ENCODE measurements at regions of chr9 and their contacts with region 1.

Region 1: DNA sequence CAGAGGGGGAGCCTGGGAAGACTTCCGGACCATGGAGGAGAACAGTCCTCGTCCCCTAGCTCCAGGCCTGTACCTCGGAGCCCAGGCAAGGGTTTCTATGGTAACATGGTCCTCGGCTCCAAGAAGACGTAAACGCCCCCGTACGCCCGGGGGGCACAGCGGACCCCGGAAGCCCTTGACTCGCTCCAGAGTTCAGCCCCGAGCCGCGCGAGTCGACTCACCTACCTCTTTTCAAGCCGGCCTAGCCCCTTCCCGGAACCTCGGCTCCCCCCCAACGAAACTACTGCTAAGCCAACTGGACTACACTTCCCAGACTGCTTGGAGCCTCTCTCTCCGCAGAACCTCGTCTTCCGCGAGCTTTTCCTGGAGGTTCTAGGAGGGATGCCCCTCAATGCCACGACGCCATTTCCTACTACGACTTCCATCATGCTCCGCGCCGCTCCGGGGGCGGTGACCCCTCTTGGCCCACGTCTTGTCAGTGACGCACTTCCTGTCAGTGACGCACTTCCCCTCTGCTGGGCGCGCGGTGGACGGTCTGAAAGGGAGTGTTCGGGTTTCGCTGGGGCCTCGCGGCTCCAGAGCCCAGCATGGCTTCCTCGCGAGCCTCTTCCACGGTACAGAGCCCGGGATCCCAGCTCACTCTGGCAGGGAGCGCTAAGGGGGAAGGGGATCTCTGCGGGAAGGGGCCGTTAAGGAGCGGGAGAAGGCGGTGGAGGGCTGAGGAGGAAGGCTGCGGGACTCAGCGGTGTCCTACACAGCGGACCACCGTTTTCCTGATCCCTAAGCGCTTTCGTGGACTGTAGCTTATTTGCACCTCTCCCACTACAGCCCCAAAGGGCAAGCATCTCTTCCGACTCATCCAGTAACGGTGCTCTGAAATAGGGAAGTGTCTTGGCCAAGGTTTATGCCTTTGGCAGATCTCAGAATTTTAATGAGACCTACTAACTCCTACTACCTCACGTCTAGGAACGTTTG is at the starts of genes CDC26 and PRPF4:
- DNase-seq: peak; percentile 99
- H3K4me3 Mint-ChIP-seq: no peak within 1 kb of the TSS
- H3K27ac Mint-ChIP-seq: no peak within 1 kb of the TSS
- H3K4me1 Mint-ChIP-seq: peaks cover 28% of the 10 kb centered on the region
- H3K27me3 Mint-ChIP-seq: no peaks in the 10 kb centered on the region
- total RNA-seq, gene CDC26: 52.0 and 57.4 TPM in 2 replicates
- total RNA-seq, gene PRPF4: 63.6 and 64.6 TPM in 2 replicates

Region 2: DNA sequence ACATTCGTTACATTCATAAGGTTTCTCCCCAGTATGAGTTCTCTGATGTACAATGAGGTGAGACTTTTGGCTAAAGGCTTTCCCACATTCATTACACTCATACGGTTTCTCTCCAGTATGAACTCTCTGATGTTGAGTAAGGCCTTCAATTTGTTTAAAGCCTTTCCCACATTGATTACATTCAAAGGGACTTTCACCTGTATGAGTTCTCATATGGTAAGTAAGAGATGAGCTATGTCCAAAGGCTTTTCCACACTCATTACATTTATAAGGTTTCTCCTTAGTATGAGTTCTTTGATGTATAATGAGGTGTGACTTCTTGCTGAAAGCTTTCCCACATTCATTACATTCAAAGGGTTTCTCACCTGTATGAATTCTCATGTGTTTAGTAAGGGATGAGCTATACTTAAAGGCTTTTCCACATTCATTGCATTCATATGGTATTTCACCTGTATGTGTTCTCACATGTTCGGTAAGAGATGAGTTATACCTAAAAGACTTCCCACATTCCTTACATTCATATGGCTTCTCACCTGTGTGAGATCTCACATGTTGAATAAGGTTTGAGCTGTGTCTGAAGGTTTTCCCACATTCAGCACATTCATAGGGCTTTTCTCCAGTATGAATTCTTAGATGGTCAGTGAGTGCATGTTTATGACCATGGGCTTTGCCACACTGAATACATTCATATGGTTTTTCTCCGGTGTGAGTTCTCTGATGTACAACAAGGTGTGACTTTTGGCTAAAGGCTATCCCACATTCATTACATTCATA is 232.4 kb before region 1 on chr9:
- intact Hi-C with region 1: no loop called
- DNase-seq: no peak
- H3K4me3 Mint-ChIP-seq: no peak overlapping the region
- H3K27ac Mint-ChIP-seq: no peak overlapping the region
- H3K4me1 Mint-ChIP-seq: no peaks in the 10 kb centered on the region
- H3K27me3 Mint-ChIP-seq: no peaks in the 10 kb centered on the region

Region 3: DNA sequence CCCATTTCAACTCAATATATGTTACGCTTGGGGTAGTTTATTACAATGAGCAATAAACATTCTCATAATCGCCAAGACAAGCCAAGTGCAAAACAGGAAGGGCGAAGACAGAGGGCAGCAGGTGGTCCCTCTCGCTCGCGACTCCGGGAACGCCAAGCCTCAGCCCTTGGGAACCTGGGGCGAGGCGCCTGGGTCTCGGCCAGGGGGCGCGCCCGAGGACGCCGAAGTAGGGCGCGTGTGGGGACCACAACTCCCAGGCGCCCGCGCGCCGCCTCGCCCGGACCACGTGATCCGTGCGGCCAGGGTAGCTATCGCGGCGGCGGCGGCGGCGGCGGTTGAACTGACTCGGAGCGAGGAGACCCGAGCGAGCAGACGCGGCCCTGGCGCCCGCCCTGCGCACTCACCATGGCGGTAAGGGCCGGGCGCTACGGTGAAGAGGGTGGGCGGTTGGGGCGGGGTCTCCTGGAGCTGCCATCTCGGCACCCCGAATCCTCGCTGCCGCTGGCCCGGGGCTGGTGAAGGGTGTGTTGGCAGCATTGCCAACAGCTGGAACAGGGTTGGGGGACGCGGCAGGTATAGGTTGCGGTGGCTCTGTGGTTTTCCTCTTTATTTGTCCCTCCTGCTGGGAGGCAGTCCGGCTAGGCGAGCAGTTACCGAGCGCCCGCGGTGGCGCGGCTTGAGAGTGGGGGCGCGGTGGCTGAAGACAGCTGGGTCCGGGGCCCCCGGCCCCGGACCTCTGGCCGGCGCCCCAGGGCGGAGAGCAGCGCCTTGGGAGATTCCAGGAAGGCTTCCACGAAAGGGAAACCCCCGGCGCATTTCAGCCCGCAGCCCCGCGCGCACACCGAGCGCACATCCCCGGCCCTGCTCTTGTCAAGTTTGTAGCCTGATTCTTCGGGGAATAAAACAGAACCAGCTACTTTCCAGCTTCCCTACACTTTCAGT is 124.5 kb before region 1 on chr9 and contains the start of gene SLC31A2:
- intact Hi-C with region 1: loop called (anchors 2 kb)
- DNase-seq: peak; percentile 97
- H3K4me3 Mint-ChIP-seq: peak within 1 kb of the TSS; percentile 84
- H3K27ac Mint-ChIP-seq: peak within 1 kb of the TSS; percentile 80
- H3K4me1 Mint-ChIP-seq: peaks cover 28% of the 10 kb centered on the region
- H3K27me3 Mint-ChIP-seq: peaks cover 2% of the 10 kb centered on the region
- total RNA-seq, gene SLC31A2: 4.5 and 5.3 TPM in 2 replicates

Region 4: GRCh38 chr9:113322671-113323070 is 47.2 kb after region 1 on chr9:
- intact Hi-C with region 1: no loop called
- DNase-seq: no peak
- H3K4me3 Mint-ChIP-seq: no peak overlapping the region
- H3K27ac Mint-ChIP-seq: no peak overlapping the region
- H3K4me1 Mint-ChIP-seq: no peaks in the 10 kb centered on the region
- H3K27me3 Mint-ChIP-seq: no peaks in the 10 kb centered on the region

Region 5: DNA sequence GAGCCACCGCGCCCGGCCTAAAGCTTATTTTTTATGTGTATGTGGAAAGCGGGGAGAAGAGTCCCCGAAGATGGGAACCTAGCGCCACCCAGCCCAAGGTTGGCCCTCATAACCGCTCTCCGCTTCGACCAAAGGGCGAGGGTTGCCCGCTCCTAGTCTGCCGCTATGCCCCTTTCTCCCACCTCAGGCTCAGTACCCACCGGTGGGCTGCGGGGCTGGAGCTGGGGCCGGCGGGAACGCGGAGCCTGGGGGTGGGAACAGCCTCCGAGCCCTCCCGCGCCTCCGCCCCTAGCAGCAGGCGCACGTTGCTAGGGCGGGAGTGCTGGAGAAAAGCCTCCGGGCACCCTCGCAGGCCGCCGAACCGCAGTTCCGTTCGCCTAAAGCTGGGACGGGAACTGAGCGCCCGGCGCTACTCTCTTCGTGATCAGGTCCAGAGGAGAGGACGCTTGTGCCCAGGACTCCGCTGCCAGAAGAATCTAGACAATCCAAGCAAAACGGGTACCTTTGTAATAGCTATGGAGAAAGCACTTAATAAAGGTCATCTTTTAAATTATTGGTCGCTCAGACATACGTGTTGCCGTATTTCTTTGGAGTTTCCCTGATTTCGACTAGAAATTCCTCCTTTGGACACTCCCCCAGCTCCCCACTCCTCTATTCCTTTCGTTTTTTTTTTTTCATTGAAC is 64.7 kb after region 1 on chr9 and contains the start of gene WDR31:
- intact Hi-C with region 1: loop called (anchors 1 kb)
- DNase-seq: peak; percentile 95
- H3K4me3 Mint-ChIP-seq: peak within 1 kb of the TSS; percentile 81
- H3K27ac Mint-ChIP-seq: peak within 1 kb of the TSS; percentile 78
- H3K4me1 Mint-ChIP-seq: peaks cover 43% of the 10 kb centered on the region
- H3K27me3 Mint-ChIP-seq: no peaks in the 10 kb centered on the region
- total RNA-seq, gene WDR31: 2.2 and 2.7 TPM in 2 replicates

Region 6: DNA sequence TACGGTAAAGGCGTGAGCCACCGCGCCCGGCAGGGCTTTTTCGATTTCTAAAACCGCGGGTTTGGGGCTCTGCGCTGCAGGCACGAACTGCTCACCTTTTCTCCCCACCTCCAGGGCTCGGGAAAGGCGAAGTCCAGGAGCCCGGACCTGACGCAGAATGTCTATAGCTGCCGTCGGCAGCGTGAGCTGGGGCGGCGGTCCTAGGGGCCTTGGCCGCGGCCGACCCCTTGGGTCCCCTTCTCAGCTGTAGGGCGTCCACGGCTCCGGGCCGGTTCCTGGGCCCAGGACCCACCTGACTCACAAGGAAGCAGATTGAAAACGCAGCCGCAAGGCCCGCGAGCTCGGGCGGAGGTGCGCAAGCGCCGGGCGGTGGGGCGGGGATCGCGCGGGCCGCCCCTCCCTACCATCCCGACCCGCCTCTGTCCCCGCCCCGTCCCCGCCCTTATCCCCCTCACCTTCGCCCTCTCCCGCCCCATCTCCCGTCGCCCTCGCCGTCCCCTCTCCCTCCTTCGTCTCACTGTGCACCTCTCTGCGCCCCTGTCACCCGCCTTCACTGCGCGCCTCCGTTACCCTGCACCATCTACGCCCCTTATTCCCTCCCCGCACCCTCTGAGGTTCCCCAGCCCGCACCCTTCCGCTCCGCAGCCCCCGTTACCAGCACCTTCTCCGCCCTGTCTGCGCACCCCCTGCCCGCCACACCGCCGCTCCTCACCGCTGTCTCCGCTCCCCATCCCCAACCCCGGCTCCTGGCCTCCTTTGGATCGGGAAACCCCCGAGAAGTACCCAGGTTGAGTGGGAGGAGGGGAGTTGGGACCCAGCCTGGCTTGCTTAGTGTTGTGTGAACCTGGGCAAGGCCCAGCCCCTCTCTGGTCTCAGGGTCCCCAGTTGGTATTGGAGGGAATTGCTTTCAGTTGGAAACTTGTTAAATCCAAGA is 101.5 kb after region 1 on chr9 and contains the start of gene HDHD3:
- intact Hi-C with region 1: loop called (anchors 1 kb)
- DNase-seq: peak; percentile 95
- H3K4me3 Mint-ChIP-seq: peak within 1 kb of the TSS; percentile 92
- H3K27ac Mint-ChIP-seq: peak within 1 kb of the TSS; percentile 83
- H3K4me1 Mint-ChIP-seq: peaks cover 15% of the 10 kb centered on the region
- H3K27me3 Mint-ChIP-seq: no peaks in the 10 kb centered on the region
- total RNA-seq, gene HDHD3: 16.5 and 17.8 TPM in 2 replicates

Region 7: DNA sequence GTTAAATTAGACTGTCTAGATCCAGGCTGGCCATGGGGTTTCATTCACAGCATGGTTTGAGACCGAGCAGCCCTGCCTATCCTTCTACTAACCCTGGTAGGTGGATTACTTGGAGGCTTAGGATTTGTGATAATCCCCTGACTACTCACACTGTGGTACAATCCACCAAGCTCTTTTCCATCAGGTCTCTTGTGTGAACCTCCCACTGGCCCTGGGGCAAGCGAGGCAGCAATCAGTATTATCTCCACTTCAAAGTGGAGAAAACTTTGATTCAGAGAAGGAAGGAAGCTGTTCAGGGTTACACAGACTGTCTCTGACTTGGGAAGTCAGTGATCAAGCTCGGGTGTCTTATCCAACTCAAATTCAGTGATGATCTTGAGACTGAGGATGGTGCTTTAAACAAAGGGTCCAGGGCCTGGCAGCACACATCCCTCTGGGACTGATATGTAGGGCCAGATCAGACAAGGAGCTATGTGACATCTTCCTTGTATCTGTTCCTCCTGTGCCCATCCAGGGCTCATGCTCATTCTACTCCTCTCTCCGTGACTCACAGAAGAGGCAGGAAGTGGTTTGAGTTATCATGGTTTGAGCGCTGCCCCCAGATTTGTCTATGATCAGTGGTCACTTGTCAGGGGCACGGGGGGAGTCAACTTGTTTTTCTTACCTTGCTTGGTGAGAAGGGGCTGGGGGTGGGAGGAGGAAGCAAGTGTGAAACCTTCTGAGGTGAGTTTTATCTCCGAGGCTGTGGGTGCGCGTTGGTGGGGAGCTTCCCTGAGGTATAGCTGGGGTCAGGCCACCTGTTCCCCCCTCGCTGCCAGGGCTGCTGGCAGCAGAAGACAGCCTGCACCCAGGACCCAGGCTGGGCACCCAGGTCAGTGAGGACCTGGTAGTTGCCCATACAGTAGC is 236.7 kb after region 1 on chr9:
- intact Hi-C with region 1: loop called (anchors 10 kb)
- DNase-seq: peak; percentile 89
- H3K4me3 Mint-ChIP-seq: peak overlapping the region; percentile 74
- H3K27ac Mint-ChIP-seq: peak overlapping the region; percentile 96
- H3K4me1 Mint-ChIP-seq: peaks cover 64% of the 10 kb centered on the region
- H3K27me3 Mint-ChIP-seq: no peaks in the 10 kb centered on the region

Region 8: DNA sequence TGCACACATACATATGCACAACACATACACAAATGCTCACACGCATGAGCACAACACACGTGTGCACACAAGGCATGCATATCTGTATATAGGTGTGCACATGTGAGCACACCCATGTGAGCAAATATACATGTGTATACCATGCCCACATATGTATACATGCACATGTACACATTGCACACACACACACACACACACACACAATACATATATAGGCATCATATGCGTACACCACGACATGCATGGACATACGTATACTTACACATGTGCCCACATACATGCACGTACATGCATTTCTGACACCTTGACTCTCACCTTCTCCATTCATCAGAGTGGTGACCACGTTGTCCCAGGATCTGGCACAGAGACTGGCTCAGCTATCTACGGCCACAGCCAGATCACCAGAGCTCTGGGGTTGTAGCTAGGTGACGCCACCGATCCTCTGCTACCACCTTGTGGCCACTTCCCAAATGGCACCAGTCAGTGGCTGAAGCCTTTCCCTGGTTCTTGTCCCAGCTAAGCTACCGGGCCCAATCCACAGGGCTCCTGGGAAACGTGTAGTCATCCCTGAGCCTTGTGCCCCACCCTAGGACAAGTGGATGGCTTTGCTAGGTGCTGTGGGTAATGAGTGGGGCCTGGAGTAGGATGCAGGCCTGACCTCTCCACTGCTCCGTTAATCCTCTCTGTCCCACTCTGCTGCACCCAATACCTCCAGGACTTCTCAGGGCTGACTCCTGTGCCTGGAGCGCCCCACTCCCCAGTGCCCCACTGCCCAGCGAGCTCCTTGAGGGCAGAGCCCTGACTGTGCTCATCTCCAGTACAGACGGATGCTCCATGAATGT is 382.5 kb after region 1 on chr9:
- intact Hi-C with region 1: loop called (anchors 2 kb)
- DNase-seq: peak; percentile 94
- H3K4me3 Mint-ChIP-seq: no peak overlapping the region
- H3K27ac Mint-ChIP-seq: no peak overlapping the region
- H3K4me1 Mint-ChIP-seq: peaks cover 9% of the 10 kb centered on the region
- H3K27me3 Mint-ChIP-seq: peaks cover 22% of the 10 kb centered on the region